Dendritic cell treated with granulocyte-macrophage colony-stimulating factor and Interleukin-4, amounts not matched to agents 40 ng/mL and 50 ng/mL, for 4 days (primary cell): ENCODE measurements at regions of chr18 and their contacts with region 1.

Region 1: DNA sequence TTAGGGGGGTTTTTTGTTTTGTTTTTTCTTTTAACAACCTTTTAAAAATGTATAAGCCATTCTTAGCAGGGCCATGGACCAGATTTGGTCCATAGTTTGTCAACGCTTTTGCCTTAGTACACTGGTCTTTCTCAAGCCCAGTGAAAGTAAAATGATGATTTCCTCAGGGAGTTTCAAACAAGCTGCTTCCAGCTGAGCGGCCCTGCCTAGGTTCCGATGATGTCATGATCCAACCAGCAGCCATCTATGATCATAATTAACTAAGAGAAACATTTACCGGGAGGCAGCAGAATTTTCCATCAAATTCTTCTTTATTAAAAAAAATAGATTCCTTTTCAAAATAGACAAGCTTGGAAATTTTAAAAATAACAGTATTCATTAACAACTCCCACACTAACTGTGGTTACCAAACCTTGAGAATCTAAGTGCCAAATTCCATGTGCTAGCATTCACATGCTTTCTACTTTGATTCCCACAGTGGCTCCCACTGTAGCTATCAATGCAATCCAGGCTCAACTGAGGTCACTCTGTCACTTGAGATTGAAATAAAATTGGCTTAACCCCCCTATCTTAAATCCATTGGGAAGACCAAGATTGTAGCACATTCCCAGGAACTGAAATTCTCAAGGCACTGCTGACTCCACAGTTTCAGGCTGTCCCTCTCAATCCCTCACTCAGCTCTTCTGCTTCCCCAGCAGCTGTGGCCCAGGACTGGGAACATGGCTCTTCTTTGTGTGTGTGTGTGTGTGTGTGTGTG is 148.9 kb downstream of the RNF152 start:
- H3K4me3 Mint-ChIP-seq: no peak overlapping the region
- H3K27ac Mint-ChIP-seq: no peak overlapping the region
- H3K4me1 Mint-ChIP-seq: peaks cover 48% of the 10 kb centered on the region
- H3K27me3 Mint-ChIP-seq: peaks cover 6% of the 10 kb centered on the region

Region 2: DNA sequence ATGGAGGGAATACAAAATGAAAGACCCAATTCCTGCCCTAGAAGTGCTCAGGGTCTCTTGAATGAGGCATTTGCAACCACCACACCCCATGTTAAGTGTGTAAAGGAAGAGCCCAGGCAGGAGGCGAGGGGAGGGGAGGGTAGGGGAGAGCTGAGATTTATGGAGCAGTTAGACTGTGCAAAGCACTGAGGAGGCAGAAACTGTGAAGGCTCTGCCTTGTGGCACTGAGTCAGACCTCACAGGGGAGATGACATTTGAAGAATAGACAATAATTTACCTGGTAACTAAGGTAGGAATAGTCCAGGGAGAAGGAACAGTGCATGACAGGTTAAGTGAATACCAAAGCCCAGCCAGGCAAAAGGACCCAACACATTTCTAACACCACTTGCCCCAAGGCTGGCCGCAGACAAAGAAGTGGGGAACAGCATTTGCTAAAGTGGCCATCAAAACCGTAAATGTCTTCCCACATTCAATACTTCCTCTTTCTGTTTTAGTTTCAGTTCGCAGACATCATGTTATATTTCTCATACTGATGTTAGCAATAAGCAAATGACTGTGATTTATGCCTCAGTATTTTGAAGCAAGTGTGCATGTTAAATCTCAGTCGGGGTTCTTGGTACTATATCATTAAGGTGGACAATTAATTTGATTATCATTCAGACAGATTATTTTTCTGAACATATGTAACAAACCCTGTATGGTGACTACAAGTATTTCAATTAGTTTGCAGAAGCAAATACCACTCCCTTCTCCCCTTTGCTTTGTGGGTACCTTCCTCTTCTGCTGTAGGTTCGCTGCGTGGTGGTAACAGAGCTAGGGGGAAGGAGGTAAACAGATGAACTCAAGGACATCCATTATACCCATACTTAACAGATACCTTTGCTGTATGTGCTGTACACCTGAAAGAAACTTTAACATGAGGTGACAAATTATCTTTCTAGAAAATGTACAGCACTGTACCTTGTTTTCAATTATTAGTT is 383.3 kb before region 1 on chr18:
- intact Hi-C with region 1: no loop called
- H3K4me3 Mint-ChIP-seq: peak overlapping the region; percentile 6
- H3K27ac Mint-ChIP-seq: no peak overlapping the region
- H3K4me1 Mint-ChIP-seq: peaks cover 8% of the 10 kb centered on the region
- H3K27me3 Mint-ChIP-seq: peaks cover 3% of the 10 kb centered on the region

Region 3: GRCh38 chr18:61581578-61582201 is 162.3 kb before region 1 on chr18:
- intact Hi-C with region 1: loop called (anchors 10 kb)
- H3K4me3 Mint-ChIP-seq: peak overlapping the region; percentile 18
- H3K27ac Mint-ChIP-seq: no peak overlapping the region
- H3K4me1 Mint-ChIP-seq: peaks cover 24% of the 10 kb centered on the region
- H3K27me3 Mint-ChIP-seq: peaks cover 60% of the 10 kb centered on the region

Region 4: GRCh38 chr18:61679836-61680235 is 64.1 kb before region 1 on chr18:
- intact Hi-C with region 1: no loop called
- H3K4me3 Mint-ChIP-seq: no peak overlapping the region
- H3K27ac Mint-ChIP-seq: no peak overlapping the region
- H3K4me1 Mint-ChIP-seq: no peaks in the 10 kb centered on the region
- H3K27me3 Mint-ChIP-seq: peaks cover 3% of the 10 kb centered on the region